AG04450 (cell line): ENCODE measurements at regions of chr5 and their contacts with region 1.

Region 1: DNA sequence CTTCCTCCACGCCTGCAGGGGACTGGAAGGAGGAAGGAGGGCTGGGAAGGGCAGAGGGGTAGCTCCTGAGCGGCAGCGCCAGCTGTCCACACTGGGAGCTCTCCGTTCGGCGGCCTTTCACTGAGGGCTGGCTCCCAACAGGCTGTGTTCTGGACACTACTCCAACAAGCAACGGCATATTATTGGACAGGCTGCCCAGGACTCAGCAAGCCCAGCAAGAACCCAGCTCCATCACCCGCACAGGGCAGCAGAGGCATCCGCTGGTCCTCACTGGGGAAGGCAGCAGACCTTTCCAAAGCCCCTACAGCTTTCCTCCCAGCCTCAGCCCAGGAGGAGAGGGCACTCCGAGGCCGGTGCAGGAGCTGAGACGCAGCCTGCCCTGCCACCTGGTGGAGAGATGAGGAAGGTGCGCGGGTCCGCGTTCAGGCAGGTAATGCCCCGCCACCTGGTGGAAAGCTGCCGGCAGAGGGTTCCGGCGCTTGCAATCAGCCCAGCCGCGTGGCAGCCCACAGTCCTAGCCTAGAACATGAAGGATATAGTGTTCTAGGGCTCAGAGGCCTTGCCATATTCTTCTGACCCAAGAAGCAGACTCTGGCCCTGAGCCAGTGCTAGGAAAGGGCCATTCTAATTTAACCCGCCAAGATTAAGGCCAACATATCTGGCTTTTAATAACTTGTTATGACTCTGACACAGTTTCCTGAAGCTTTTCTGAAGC is 74.4 kb downstream of the NRG2 start:
- DNase-seq: peak; percentile 15
- H3K4me3 ChIP-seq: no peak overlapping the region
- H3K27ac ChIP-seq: no peak overlapping the region
- H3K27me3 ChIP-seq: peaks cover 16% of the 10 kb centered on the region
- CTCF ChIP-seq: peak; percentile 98

Region 2: DNA sequence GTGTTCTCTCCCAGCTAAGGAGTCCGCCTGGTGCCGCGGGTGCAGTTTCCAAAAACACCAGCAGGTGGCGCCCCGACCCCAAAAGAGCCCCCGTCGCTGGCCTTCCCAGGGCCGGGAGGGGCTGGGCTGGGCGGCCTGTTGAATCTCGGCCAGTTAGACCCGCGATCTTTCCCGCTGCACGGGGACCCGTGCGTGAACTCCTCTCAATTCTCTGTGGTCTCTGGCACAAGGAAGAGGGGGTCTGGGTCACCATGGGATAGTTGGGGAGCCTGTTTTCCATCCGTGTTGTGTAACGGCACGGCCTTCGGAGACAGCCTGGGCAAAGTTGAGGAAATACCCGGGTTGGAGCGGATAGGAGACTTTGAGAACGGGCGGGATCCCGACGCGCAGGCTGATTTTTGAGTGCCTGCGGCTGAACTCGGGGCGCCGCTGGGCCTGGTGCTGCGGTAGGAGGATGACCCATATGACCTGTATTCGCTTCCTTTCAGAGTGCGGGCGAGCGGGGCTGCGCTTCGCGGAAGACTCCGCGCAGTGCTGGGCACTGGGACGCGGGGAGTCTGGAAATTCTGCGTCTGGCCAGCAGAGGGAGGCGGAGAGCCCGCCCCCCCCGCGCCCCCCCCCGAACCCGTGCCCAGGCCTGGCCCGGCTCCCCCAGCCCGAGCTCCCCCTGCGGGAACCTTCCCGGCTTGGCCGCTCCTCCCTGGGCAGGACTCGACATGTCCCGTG is 181.0 kb before region 1 on chr5:
- CTCF ChIA-PET with region 1: interaction called, 214 read pairs
- POLR2A ChIA-PET with region 1: no interaction called
- DNase-seq: peak; percentile 27
- H3K4me3 ChIP-seq: peak overlapping the region; percentile 70
- H3K27ac ChIP-seq: no peak overlapping the region
- H3K27me3 ChIP-seq: peaks cover 21% of the 10 kb centered on the region
- CTCF ChIP-seq: peak; percentile 92

Region 3: GRCh38 chr5:139844472-139845145 is 124.1 kb before region 1 on chr5:
- CTCF ChIA-PET with region 1: interaction called, 10 read pairs
- POLR2A ChIA-PET with region 1: no interaction called
- DNase-seq: peak; percentile 11
- H3K4me3 ChIP-seq: no peak overlapping the region
- H3K27ac ChIP-seq: no peak overlapping the region
- H3K27me3 ChIP-seq: peaks cover 40% of the 10 kb centered on the region
- CTCF ChIP-seq: peak; percentile 77

Region 4: GRCh38 chr5:139985733-139986132 is 17.0 kb after region 1 on chr5:
- CTCF ChIA-PET with region 1: interaction called, 13 read pairs
- POLR2A ChIA-PET with region 1: no interaction called
- DNase-seq: peak; percentile 3
- H3K4me3 ChIP-seq: no peak overlapping the region
- H3K27ac ChIP-seq: no peak overlapping the region
- H3K27me3 ChIP-seq: peaks cover 17% of the 10 kb centered on the region
- CTCF ChIP-seq: no peak